ENCODE measurements at regions of chr17 and their contacts with region 1.

Region 1: GRCh38 chr17:76182016-76182764 is 41.1 kb upstream of the FOXJ1 start:
- DNase-seq: peak; percentile 88 to 94 (median 89)
- H3K4me3 ChIP-seq: no peak overlapping the region
- H3K4me3 Mint-ChIP-seq: peak overlapping the region in 6 of 8 donors; percentile 57 to 78 (median 63)
- H3K27ac ChIP-seq: no peak overlapping the region
- H3K27ac Mint-ChIP-seq: peak overlapping the region; percentile 92 to 98 (median 96)
- H3K4me1 ChIP-seq: peaks cover 72% of the 10 kb centered on the region
- H3K4me1 Mint-ChIP-seq: peaks cover 31 to 72% (median 55%) of the 10 kb centered on the region in 4 donors
- H3K27me3 ChIP-seq: no peaks in the 10 kb centered on the region
- H3K27me3 Mint-ChIP-seq: no peaks in the 10 kb centered on the region

Region 2: DNA sequence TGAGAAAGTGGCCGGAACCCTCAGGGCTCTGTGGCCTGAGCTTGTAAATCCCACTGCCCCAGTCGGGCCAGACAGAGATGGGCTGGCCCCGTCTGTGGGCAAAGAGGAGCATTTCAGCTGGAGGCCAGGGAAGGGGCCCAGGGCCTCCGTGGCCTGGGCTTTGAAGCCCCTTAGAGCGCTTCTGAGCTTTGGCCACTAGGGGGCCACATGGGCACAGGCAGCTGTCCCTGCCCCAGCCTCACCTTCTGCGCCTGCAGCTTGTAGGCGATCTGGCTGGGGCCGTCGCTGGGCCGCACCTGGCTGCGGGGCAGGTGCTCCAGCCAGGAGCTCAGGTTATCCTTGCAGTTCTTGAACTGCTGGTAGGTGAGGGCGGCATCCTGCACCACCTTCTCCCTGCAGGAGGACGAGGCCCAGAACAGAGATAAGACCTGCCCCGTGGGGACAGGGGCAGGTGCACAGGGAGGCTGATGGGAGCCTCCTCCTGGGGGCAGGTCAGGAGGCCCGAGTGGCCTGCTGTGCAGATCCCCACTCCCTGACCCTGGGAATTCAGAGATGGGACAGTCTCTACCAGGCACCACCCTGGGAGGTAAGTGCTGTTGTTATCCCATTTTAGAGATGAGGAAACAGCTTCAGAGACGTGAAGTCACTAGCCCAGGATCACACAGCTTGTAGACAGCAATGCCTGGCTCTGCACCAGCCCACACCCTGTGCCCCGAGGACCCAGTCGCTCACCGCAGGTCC is 167.8 kb before region 1 on chr17:
- CTCF ChIA-PET with region 1: interaction called, 6 read pairs
- POLR2A ChIA-PET with region 1: no interaction called
- intact Hi-C with region 1: loop called (anchors 5 kb)
- DNase-seq: peak; percentile 72 to 79 (median 74)
- H3K4me3 ChIP-seq: no peak overlapping the region
- H3K4me3 Mint-ChIP-seq: peak overlapping the region in 2 of 8 donors; percentile 34 to 52
- H3K27ac ChIP-seq: no peak overlapping the region
- H3K27ac Mint-ChIP-seq: peak overlapping the region in 2 of 7 donors; percentile 50 to 81
- H3K4me1 ChIP-seq: peaks cover 8% of the 10 kb centered on the region
- H3K4me1 Mint-ChIP-seq: peaks cover 3 to 11% (median 6%) of the 10 kb centered on the region in 4 donors
- H3K27me3 ChIP-seq: no peaks in the 10 kb centered on the region
- H3K27me3 Mint-ChIP-seq: no peaks in the 10 kb centered on the region

Region 3: DNA sequence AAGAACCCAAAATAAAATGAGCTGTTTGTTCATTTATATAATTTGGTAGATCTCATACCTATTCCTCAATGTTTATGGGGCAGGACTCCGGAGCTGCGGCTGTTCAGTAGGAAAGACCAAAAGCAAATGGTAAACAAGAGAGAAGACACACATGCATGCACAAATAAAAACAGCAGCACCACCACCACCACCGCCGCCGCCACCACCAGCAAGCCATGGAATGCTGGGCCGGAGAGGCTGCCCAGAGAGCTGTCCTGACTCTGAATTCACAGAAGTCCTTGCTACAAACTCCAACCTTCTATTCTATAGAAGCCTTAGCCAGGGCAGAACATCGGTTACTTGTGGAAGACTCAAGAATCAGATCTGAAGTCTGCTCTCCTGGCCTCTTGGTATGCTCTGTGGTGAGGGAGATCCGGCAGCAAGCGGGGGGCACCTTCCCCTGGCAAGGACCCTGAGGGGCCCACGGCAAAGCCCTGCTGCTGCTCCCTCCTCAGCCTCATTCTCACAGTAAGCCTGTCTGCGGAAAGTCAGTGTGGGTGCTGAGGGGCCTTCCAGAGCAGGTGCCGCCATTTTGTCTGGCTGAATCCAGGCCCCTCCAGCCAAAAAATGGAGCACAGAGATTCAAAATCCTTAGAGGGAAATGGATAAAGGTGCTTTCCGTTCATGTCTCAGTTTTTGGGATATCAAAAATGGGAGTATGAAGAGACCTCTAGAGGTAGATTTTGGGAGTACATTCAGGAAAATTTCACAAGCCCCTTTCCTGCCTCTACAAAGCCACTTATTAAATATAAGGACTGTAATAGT is 34.8 kb before region 1 on chr17:
- CTCF ChIA-PET with region 1: interaction called, 214 read pairs
- POLR2A ChIA-PET with region 1: interaction called, 157 read pairs
- intact Hi-C with region 1: loop called (anchors 1 kb)
- DNase-seq: no peak
- H3K4me3 ChIP-seq: no peak overlapping the region
- H3K4me3 Mint-ChIP-seq: no peak overlapping the region
- H3K27ac ChIP-seq: no peak overlapping the region
- H3K27ac Mint-ChIP-seq: peak overlapping the region; percentile 31 to 99 (median 64)
- H3K4me1 ChIP-seq: peaks cover 63% of the 10 kb centered on the region
- H3K4me1 Mint-ChIP-seq: peaks cover 43 to 77% (median 60%) of the 10 kb centered on the region in 4 donors
- H3K27me3 ChIP-seq: no peaks in the 10 kb centered on the region
- H3K27me3 Mint-ChIP-seq: no peaks in the 10 kb centered on the region

Region 4: GRCh38 chr17:76171706-76172105 is 10.5 kb before region 1 on chr17:
- CTCF ChIA-PET with region 1: interaction called, 16 read pairs
- POLR2A ChIA-PET with region 1: interaction called, 11 read pairs
- intact Hi-C with region 1: no loop called
- DNase-seq: no peak
- H3K4me3 ChIP-seq: no peak overlapping the region
- H3K4me3 Mint-ChIP-seq: no peak overlapping the region
- H3K27ac ChIP-seq: no peak overlapping the region
- H3K27ac Mint-ChIP-seq: no peak overlapping the region
- H3K4me1 ChIP-seq: no peaks in the 10 kb centered on the region
- H3K4me1 Mint-ChIP-seq: peaks cover 3 to 9% (median 4%) of the 10 kb centered on the region in 4 donors
- H3K27me3 ChIP-seq: no peaks in the 10 kb centered on the region
- H3K27me3 Mint-ChIP-seq: no peaks in the 10 kb centered on the region

Region 5: DNA sequence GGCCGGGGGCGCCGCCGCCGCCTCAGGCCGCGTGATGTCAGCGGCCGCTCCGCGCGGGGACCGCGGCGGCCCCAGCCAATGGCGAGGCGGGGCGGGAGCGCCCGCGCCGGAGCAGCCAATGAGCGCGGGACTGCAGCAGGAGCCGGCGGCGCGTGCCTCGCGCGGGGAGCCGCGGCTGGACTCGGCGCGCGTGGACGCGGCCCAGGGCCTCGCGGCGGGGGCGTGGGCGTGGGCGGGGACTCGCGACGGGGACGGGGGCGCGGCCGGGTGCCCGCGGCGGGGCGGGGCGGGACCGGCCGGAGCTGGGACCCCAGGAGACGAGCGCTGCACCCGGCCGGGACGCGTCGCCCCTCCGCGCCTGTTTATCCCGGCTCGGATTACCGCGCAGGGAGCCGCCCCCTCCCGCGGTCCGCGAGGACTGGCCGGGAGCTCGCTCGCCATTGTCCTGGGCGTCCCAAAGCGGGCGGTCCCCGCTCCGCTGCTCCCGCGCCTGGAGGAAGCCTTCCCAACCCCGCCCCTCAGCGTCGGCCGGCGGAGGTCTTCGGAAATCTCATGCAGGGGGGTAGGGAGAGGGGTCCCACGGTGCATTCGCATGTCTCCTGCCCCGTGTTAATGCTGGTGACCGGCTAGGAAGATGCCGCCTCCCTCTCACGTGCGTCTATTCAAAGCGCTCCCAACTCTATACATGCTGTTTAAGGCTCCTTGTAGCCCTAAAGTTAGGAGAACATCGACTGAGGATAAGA is 58.4 kb after region 1 on chr17 and contains the start of gene RNF157:
- CTCF ChIA-PET with region 1: interaction called, 16 read pairs
- POLR2A ChIA-PET with region 1: interaction called, 21 read pairs
- intact Hi-C with region 1: no loop called
- DNase-seq: peak; percentile 61 to 76 (median 72)
- H3K4me3 ChIP-seq: peak within 1 kb of the TSS; percentile 70 to 71
- H3K4me3 Mint-ChIP-seq: peak within 1 kb of the TSS; percentile 89 to 98 (median 92)
- H3K27ac ChIP-seq: peak within 1 kb of the TSS; percentile 50
- H3K27ac Mint-ChIP-seq: peak within 1 kb of the TSS; percentile 86 to 96 (median 93)
- H3K4me1 ChIP-seq: peaks cover 51% of the 10 kb centered on the region
- H3K4me1 Mint-ChIP-seq: peaks cover 19 to 72% (median 47%) of the 10 kb centered on the region in 4 donors
- H3K27me3 ChIP-seq: no peaks in the 10 kb centered on the region
- H3K27me3 Mint-ChIP-seq: no peaks in the 10 kb centered on the region
- total RNA-seq, gene RNF157: 19.5 to 22.5 TPM

Region 6: GRCh38 chr17:76264755-76265596 is 82.8 kb after region 1 on chr17 and contains the start of gene UBALD2:
- CTCF ChIA-PET with region 1: interaction called, 47 read pairs
- POLR2A ChIA-PET with region 1: interaction called, 603 read pairs
- intact Hi-C with region 1: no loop called
- DNase-seq: peak; percentile 99
- H3K4me3 ChIP-seq: peak within 1 kb of the TSS; percentile 94 to 100
- H3K4me3 Mint-ChIP-seq: peak within 1 kb of the TSS; percentile 89 to 95 (median 92)
- H3K27ac ChIP-seq: peak within 1 kb of the TSS; percentile 82
- H3K27ac Mint-ChIP-seq: peak within 1 kb of the TSS; percentile 93 to 98 (median 96)
- H3K4me1 ChIP-seq: peaks cover 57% of the 10 kb centered on the region
- H3K4me1 Mint-ChIP-seq: peaks cover 33 to 69% (median 52%) of the 10 kb centered on the region in 4 donors
- H3K27me3 ChIP-seq: no peaks in the 10 kb centered on the region
- H3K27me3 Mint-ChIP-seq: no peaks in the 10 kb centered on the region
- total RNA-seq, gene UBALD2: 101 to 103 TPM